ENCODE measurements at regions of chr6 and their contacts with region 1.

Region 1: GRCh38 chr6:139364302-139364981 is 10.0 kb downstream of the CITED2 start:
- DNase-seq: no peak
- H3K4me3 ChIP-seq: no peak overlapping the region
- H3K27ac ChIP-seq: no peak overlapping the region
- H3K4me1 ChIP-seq: peaks cover 0 to 21% (median 15%) of the 10 kb centered on the region in 4 experiments; a peak in 5 of 7 replicates
- H3K27me3 ChIP-seq: no peaks in the 10 kb centered on the region
- CTCF ChIP-seq: peak in 2 of 3 experiments; percentile 48 to 54; a peak in 2 of 4 replicates
- EP300 ChIP-seq: no peak
- POLR2A ChIP-seq: no peak
- RAD21 ChIP-seq: peak; percentile 91 to 92

Region 2: GRCh38 chr6:139124887-139125672 is 239.4 kb before region 1 on chr6:
- CTCF ChIA-PET with region 1: interaction called, 13 read pairs
- POLR2A ChIA-PET with region 1: no interaction called
- DNase-seq: no peak
- H3K4me3 ChIP-seq: no peak overlapping the region
- H3K27ac ChIP-seq: no peak overlapping the region
- H3K4me1 ChIP-seq: no peaks in the 10 kb centered on the region
- H3K27me3 ChIP-seq: no peaks in the 10 kb centered on the region
- CTCF ChIP-seq: peak; percentile 47 to 64 (median 54)
- EP300 ChIP-seq: no peak
- POLR2A ChIP-seq: no peak
- RAD21 ChIP-seq: peak; percentile 69 to 81

Region 3: DNA sequence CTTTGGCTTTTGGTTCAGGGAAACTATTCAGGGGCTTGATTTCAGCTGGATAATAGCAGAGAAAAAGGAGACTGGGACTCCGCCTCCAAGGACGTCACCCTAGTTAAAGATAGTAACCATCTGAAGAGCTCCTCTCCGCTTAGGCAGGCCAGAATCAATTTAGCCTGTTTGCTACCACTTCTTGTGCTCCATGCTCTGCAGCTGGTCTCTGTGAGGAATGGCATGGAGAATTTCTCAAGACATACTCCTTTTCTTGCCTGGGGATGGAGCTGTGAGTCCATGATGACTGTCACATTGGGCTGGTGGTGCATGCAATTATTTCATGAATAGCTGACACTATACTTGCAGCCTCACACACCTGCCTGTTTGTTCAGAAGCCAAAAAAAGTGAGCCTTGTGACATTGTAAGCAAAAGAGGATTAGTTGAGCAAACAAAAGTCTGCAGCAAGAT is 134.0 kb before region 1 on chr6:
- CTCF ChIA-PET with region 1: interaction called, 14 read pairs
- POLR2A ChIA-PET with region 1: no interaction called
- DNase-seq: no peak
- H3K4me3 ChIP-seq: no peak overlapping the region
- H3K27ac ChIP-seq: no peak overlapping the region
- H3K4me1 ChIP-seq: peaks cover 0 to 7% (median 0%) of the 10 kb centered on the region in 4 experiments; a peak in 2 of 7 replicates
- H3K27me3 ChIP-seq: no peaks in the 10 kb centered on the region
- CTCF ChIP-seq: peak; percentile 9 to 41 (median 21); a peak in 3 of 4 replicates
- EP300 ChIP-seq: no peak
- POLR2A ChIP-seq: no peak
- RAD21 ChIP-seq: peak; percentile 63 to 75

Region 4: DNA sequence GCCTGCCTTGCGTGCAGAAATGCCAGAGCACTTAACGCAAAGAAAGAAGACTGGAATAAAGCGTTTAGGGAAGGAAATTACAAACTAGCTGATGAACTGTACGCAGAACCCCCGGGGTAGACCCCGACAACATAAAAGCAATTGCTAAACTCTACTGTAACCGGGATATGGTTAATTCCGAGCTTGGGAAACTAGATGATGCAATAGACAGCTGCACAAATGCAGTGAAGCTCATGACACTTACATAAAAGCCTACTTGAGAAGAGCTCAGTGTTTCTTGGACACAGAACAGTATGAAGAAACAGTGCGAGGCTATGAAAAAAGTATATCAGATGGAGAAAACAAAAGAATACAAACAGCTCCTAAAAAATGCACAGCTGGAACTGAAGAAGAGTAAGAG is 25.6 kb before region 1 on chr6:
- CTCF ChIA-PET with region 1: no interaction called
- POLR2A ChIA-PET with region 1: no interaction called
- DNase-seq: no peak
- H3K4me3 ChIP-seq: no peak overlapping the region
- H3K27ac ChIP-seq: no peak overlapping the region
- H3K4me1 ChIP-seq: no peaks in the 10 kb centered on the region; a peak in 2 of 7 replicates
- H3K27me3 ChIP-seq: no peaks in the 10 kb centered on the region
- CTCF ChIP-seq: no peak
- EP300 ChIP-seq: no peak
- POLR2A ChIP-seq: no peak
- RAD21 ChIP-seq: no peak

Measured in H1 (cell line).